B cell (primary cell): ENCODE measurements at regions of chr1 and their contacts with region 1.

Region 1: DNA sequence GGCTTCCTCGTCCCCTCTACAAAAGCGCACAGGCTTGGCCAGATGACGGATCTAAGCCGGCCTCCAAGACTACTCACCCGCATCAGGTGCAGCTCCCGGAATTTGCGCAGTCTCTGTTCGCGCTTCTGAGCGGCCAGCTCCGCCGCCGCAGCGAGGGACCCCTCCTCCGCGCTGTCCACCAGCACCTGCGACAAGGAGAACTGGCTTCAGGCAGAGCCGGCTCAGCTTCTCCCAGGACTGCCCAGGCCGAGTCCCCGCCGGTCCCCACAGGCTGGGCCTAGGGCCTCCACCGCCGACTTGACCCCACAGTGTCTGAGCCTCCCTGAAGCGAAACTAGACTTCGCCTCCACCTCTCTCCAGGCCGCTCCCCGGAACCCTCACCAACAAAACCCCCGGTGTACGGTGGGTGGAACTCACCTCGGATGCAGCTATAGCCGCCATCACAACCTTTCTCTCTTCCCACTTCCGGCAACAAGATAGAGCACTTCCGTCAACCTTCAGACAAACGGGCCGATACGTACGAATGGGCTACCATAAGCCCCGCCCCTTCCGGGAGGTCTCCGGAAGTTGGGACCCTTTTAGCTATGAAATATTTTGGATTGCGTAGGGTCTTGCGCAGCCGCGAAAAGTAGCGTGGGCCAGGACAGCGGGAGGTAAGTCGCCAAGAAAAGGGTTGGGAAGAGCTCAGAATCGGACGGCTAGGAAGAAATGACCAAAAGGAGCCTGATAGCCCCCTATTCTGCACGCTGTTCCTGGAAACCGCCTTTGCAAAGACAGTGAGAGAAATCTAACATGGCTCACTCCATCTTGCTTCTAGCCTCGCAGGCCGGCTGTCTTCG is at the start of gene SYF2:
- DNase-seq: peak; percentile 94
- ATAC-seq: peak; percentile 84
- H3K4me3 ChIP-seq: peak within 1 kb of the TSS; percentile 81 to 99 (median 95)
- H3K4me3 Mint-ChIP-seq: no peak within 1 kb of the TSS
- H3K27ac ChIP-seq: peak within 1 kb of the TSS; percentile 91 to 96
- H3K27ac Mint-ChIP-seq: no peak within 1 kb of the TSS
- H3K4me1 ChIP-seq: peaks cover 25 to 35% of the 10 kb centered on the region in 2 donors
- H3K4me1 Mint-ChIP-seq: peaks cover 31% of the 10 kb centered on the region
- H3K27me3 ChIP-seq: no peaks in the 10 kb centered on the region
- H3K27me3 Mint-ChIP-seq: no peaks in the 10 kb centered on the region
- CTCF ChIP-seq: no peak
- total RNA-seq, gene SYF2: 57.4 and 67.3 TPM in 2 replicates

Region 2: DNA sequence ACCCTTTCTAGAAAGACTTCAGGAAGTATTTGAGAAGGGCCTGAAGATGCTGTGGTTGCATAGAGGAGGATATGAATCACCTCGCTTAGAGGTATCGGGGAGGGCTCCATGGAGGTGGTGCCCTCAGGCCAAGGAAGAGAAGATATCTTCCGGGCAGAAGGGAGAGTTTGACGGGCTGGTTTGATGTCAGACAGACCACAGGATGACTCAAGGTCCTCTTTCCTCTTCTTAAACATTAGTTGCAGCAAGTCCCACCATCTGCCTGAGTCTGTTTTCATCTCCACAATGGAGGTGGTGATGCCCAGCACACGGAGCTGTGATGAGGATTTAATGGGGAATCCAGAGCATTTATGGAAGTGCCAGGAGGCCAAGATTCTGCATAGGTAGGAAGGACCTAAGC is 277.1 kb before region 1 on chr1:
- CTCF ChIA-PET with region 1: no interaction called
- POLR2A ChIA-PET with region 1: no interaction called
- intact Hi-C with region 1: no loop called
- DNase-seq: no peak
- ATAC-seq: peak; percentile 67
- H3K4me3 ChIP-seq: no peak overlapping the region
- H3K4me3 Mint-ChIP-seq: peak overlapping the region; percentile 72
- H3K27ac ChIP-seq: no peak overlapping the region
- H3K27ac Mint-ChIP-seq: peak overlapping the region; percentile 76
- H3K4me1 ChIP-seq: peaks cover 48 to 76% of the 10 kb centered on the region in 2 donors
- H3K4me1 Mint-ChIP-seq: peaks cover 70% of the 10 kb centered on the region
- H3K27me3 ChIP-seq: no peaks in the 10 kb centered on the region
- H3K27me3 Mint-ChIP-seq: no peaks in the 10 kb centered on the region
- CTCF ChIP-seq: no peak

Region 3: DNA sequence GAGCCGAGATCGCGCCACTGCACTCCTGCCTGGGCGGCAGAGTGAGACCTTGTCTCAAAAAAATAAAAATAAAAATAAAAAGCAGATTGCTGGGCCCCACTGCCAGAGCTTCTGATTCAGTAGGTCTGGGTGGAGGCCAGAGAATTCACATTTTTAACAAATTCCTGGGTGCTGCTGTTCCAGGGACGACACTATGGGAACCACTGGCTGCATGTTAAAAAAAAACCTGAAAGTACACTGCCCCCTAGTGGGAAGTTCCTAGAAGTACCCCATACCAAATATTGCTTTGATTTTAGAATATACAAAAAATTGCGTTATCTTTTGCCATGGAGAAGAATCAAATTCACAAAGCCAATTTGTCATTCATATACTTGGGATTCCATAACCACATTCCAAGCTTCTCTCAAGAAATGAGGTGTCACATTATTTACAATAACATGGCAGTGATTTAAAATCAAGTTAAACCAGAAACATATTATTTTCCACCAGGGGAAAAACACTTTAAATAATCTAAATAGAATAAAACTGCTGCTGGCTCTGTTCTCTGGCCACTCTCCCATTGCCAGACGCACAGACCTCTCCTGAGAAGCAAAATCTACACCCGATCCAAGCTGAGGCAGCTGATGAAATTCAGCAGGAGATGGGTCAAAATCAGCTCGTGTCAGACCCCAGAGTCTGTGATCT is 27.3 kb before region 1 on chr1:
- CTCF ChIA-PET with region 1: interaction called, 12 read pairs
- POLR2A ChIA-PET with region 1: no interaction called
- intact Hi-C with region 1: no loop called
- DNase-seq: peak; percentile 63
- ATAC-seq: peak; percentile 49
- H3K4me3 ChIP-seq: no peak overlapping the region
- H3K4me3 Mint-ChIP-seq: no peak overlapping the region
- H3K27ac ChIP-seq: no peak overlapping the region
- H3K27ac Mint-ChIP-seq: no peak overlapping the region
- H3K4me1 ChIP-seq: no peaks in the 10 kb centered on the region
- H3K4me1 Mint-ChIP-seq: no peaks in the 10 kb centered on the region
- H3K27me3 ChIP-seq: peaks cover 0 to 7% (median 0%) of the 10 kb centered on the region in 4 experiments
- H3K27me3 Mint-ChIP-seq: peaks cover 12% of the 10 kb centered on the region
- CTCF ChIP-seq: peak; percentile 86

Region 4: DNA sequence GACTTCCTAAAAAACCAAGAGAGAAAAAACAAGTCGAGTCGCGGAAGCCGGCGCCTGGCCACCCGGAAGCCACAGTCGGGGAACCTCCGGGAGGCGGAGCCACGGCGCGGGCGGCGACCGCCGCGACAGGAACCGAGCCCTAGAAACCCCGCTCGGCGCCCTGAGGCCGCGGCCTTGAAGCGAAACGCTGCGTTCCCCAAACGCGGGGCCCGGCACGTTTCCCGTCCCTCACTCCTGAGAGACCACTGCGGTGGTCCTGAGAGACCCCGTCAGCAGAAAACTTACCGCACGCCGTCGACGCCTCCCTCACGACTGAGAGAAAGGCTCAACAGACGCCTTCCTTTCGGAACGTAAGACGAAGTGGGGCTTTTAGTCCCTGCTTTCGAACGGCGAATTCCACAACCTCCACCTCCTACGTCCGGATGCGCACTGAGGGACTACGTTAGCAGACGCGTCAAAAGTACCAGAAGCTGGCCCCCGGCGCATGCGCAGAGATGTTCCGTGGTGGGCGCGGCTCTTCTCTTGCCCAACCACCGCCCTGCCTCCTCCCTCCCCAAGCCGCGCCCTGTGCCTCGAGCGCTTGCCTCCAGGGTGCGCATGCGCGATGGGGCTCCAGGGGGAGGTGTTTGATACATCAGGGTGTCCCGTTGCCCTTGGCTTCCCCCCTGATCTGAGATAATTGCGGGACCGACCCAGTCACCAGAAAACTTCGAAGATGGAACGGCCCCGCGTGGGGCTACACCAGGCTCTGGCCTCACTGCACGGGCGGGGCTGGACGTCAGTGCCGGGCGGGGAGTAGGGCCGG is 15.0 kb after region 1 on chr1 and contains the start of gene RSRP1:
- CTCF ChIA-PET with region 1: interaction called, 10 read pairs
- POLR2A ChIA-PET with region 1: interaction called, 16 read pairs
- intact Hi-C with region 1: loop called (anchors 1 kb)
- DNase-seq: peak; percentile 99
- ATAC-seq: peak; percentile 86
- H3K4me3 ChIP-seq: peak within 1 kb of the TSS; percentile 91 to 99 (median 96)
- H3K4me3 Mint-ChIP-seq: peak within 1 kb of the TSS; percentile 99
- H3K27ac ChIP-seq: peak within 1 kb of the TSS; percentile 97 to 99
- H3K27ac Mint-ChIP-seq: peak within 1 kb of the TSS; percentile 100
- H3K4me1 ChIP-seq: peaks cover 25 to 26% of the 10 kb centered on the region in 2 donors
- H3K4me1 Mint-ChIP-seq: peaks cover 44% of the 10 kb centered on the region
- H3K27me3 ChIP-seq: no peaks in the 10 kb centered on the region
- H3K27me3 Mint-ChIP-seq: no peaks in the 10 kb centered on the region
- CTCF ChIP-seq: no peak
- total RNA-seq, gene RSRP1: 474 and 482 TPM in 2 replicates

Region 5: GRCh38 chr1:25338188-25338981 is 106.1 kb after region 1 on chr1 and contains the start of gene TMEM50A:
- CTCF ChIA-PET with region 1: no interaction called
- POLR2A ChIA-PET with region 1: no interaction called
- intact Hi-C with region 1: loop called (anchors 2 kb)
- DNase-seq: peak; percentile 95
- ATAC-seq: peak; percentile 77
- H3K4me3 ChIP-seq: peak within 1 kb of the TSS; percentile 83 to 89 (median 84)
- H3K4me3 Mint-ChIP-seq: peak within 1 kb of the TSS; percentile 96
- H3K27ac ChIP-seq: peak within 1 kb of the TSS; percentile 86 to 87
- H3K27ac Mint-ChIP-seq: peak within 1 kb of the TSS; percentile 98
- H3K4me1 ChIP-seq: peaks cover 14% of the 10 kb centered on the region in 2 donors
- H3K4me1 Mint-ChIP-seq: peaks cover 30% of the 10 kb centered on the region
- H3K27me3 ChIP-seq: no peaks in the 10 kb centered on the region
- H3K27me3 Mint-ChIP-seq: no peaks in the 10 kb centered on the region
- CTCF ChIP-seq: no peak
- total RNA-seq, gene TMEM50A: 59.4 and 62.6 TPM in 2 replicates

Region 6: DNA sequence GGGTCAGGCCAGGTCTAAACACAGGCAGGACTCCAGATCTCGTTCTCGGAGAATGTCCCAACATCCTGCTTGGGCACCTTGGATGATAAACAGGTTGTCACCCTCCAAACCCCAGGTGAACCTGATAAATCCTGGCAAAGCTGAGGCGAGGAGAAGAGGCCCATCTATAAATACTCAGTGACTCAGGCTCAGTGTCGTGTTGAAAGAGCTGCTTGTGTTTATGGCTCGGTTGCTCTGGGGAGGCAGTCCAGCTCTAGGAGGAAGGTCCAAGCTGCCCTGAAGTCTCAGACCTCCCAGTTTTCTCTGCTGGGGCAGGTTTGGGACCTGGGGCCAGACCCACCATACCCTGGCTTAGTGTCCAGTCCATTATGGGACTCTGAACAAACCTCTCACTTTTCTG is 851.0 kb after region 1 on chr1:
- CTCF ChIA-PET with region 1: no interaction called
- POLR2A ChIA-PET with region 1: no interaction called
- intact Hi-C with region 1: no loop called
- DNase-seq: no peak
- ATAC-seq: no peak
- H3K4me3 ChIP-seq: no peak overlapping the region
- H3K4me3 Mint-ChIP-seq: no peak overlapping the region
- H3K27ac ChIP-seq: no peak overlapping the region
- H3K27ac Mint-ChIP-seq: no peak overlapping the region
- H3K4me1 ChIP-seq: no peaks in the 10 kb centered on the region
- H3K4me1 Mint-ChIP-seq: no peaks in the 10 kb centered on the region
- H3K27me3 ChIP-seq: peaks cover 0 to 17% (median 2%) of the 10 kb centered on the region in 4 experiments
- H3K27me3 Mint-ChIP-seq: peaks cover 30% of the 10 kb centered on the region
- CTCF ChIP-seq: no peak